Mammary epithelial cell (primary cell): ENCODE measurements at regions of chr3 and their contacts with region 1.

Region 1: DNA sequence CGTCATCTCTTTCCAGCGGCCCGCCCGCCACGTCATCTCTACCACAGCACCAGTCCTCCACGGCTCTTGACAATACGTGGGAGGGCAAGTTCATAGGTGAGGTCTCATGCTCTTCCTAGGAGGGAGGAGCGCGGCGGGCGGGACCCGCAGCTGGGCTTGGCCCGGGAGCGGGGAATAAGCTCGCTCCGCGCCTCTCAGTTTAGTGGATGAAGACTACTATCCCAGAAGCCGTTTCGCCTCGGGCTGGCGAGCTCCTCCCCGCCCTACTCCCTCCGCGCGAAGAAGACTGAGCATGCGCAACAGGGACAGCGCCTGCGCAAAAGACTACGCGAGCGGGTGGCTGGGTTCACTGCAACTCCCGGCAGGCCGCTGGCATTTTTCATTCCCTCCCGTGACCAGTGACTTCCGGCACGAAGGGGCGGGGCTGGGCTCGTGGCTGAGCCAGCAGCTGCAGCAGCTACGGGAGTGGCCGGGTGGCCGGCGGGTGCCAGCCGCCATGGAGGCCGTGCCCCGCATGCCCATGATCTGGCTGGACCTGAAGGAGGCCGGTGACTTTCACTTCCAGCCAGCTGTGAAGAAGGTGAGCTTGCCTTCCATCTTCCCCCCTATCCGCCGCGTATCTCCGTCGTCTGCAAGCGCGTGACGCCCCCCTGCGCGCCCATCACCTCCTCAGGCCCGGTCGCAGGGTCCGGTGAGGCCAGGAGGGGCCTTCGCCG is at the start of gene PTPN23:
- DNase-seq: peak; percentile 99
- H3K4me3 ChIP-seq: peak within 1 kb of the TSS; percentile 79 to 96 (median 86)
- H3K27ac ChIP-seq: peak within 1 kb of the TSS; percentile 94
- H3K4me1 ChIP-seq: peaks cover 16% of the 10 kb centered on the region
- H3K27me3 ChIP-seq: no peaks in the 10 kb centered on the region
- CTCF ChIP-seq: no peak
- total RNA-seq, gene PTPN23: 31.3 to 46.6 TPM

Region 2: DNA sequence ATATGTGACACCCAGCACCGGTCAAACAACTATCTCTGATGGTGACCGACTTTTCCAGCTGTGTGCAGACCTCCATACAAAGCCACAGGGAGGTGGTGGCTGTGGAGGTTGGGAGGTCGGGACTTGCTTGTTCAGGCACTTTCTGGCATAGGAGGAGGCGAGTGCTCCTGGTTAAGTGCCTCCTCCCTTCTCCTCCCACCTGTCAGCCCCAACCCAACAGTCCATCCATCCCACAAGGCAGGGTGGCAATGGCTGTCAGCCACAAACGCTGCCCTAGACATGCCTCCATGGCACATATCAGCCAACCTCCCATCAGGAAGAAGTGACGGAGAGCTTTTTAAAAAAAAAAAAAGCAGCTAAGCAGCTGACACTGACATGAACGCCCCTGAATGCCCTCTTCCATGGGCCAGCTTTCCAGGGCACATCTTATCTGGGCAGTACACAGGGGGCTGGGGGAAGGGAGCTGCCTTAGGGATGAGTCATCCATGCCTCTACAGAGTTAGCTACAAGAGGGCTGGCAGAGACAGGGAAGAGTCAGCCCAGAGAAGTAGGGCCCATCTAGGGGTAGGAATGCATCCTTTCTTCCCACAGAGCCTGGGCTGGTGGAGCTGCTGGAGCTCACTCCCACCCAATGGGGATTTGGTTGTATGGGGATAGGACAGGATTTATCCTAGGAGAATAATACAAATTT is 445.4 kb before region 1 on chr3:
- CTCF ChIA-PET with region 1: no interaction called
- dilution Hi-C with region 1: no loop called
- in situ Hi-C with region 1: no loop called
- intact Hi-C with region 1: loop called (anchors 10 kb)
- DNase-seq: peak; percentile 87
- H3K4me3 ChIP-seq: no peak overlapping the region
- H3K27ac ChIP-seq: peak overlapping the region; percentile 91
- H3K4me1 ChIP-seq: peaks cover 69% of the 10 kb centered on the region
- H3K27me3 ChIP-seq: no peaks in the 10 kb centered on the region
- CTCF ChIP-seq: peak; percentile 83 to 88